Activated naive CD4-positive, alpha-beta T cell treated with anti-CD3 and anti-CD28 coated beads for 36 hours (primary cell): ENCODE measurements at regions of chr12 and their contacts with region 1.

Region 1: DNA sequence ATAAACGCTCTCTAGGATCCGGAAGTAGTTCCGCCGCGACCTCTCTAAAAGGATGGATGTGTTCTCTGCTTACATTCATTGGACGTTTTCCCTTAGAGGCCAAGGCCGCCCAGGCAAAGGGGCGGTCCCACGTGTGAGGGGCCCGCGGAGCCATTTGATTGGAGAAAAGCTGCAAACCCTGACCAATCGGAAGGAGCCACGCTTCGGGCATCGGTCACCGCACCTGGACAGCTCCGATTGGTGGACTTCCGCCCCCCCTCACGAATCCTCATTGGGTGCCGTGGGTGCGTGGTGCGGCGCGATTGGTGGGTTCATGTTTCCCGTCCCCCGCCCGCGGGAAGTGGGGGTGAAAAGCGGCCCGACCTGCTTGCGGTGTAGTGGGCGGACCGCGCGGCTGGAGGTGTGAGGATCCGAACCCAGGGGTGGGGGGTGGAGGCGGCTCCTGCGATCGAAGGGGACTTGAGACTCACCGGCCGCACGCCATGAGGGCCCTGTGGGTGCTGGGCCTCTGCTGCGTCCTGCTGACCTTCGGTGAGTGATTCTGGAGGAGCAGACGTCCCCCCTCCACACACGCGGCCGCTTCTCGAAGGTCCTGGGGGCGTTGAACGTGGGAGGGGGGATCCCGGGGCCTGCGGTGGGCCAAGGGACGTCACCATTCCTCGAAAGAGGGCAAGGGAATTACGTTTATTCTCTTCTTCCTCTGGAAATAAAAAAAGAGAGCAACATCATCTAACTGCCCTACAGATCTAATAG is at the start of gene HSP90B1:
- DNase-seq: peak; percentile 100
- H3K4me3 Mint-ChIP-seq: peak within 1 kb of the TSS; percentile 81
- H3K27ac Mint-ChIP-seq: peak within 1 kb of the TSS; percentile 100
- H3K4me1 Mint-ChIP-seq: peaks cover 57% of the 10 kb centered on the region
- H3K27me3 Mint-ChIP-seq: no peaks in the 10 kb centered on the region
- total RNA-seq, gene HSP90B1: 392 to 418 TPM

Region 2: GRCh38 chr12:103495479-103496456 is 434.4 kb before region 1 on chr12 and contains the start of gene C12orf42:
- CTCF ChIA-PET with region 1: no interaction called
- intact Hi-C with region 1: loop called (anchors 5 kb)
- DNase-seq: peak; percentile 77
- H3K4me3 Mint-ChIP-seq: peak within 1 kb of the TSS; percentile 57
- H3K27ac Mint-ChIP-seq: no peak within 1 kb of the TSS
- H3K4me1 Mint-ChIP-seq: peaks cover 29% of the 10 kb centered on the region
- H3K27me3 Mint-ChIP-seq: peaks cover 34% of the 10 kb centered on the region
- total RNA-seq, gene C12orf42: not detected

Region 3: DNA sequence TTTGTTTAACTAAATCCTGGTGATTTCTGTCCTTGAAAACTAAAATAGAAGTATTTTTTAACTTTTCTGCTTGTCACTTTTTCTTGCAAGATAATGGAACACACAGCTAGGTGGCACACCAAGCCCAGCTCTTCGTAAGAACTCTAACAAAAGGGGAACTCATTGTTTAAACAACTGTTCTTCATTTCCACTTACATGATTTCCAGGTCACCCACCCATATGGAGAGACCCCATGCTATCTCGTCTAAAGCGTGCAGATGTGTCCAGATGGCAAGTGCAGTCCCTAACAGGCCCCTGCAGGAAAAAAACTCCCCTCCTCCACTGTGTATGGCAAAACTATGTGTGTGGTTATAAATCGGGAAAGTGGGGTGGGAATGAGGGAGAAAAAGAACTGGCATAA is 45.9 kb before region 1 on chr12:
- CTCF ChIA-PET with region 1: interaction called, 4 read pairs
- intact Hi-C with region 1: loop called (anchors 1 kb)
- DNase-seq: peak; percentile 75
- H3K4me3 Mint-ChIP-seq: no peak overlapping the region
- H3K27ac Mint-ChIP-seq: no peak overlapping the region
- H3K4me1 Mint-ChIP-seq: peaks cover 22% of the 10 kb centered on the region
- H3K27me3 Mint-ChIP-seq: no peaks in the 10 kb centered on the region

Region 4: GRCh38 chr12:104064031-104064822 is 134.0 kb after region 1 on chr12 and contains the start of gene HCFC2:
- CTCF ChIA-PET with region 1: interaction called, 3 read pairs
- intact Hi-C with region 1: loop called (anchors 1 kb)
- DNase-seq: peak; percentile 91
- H3K4me3 Mint-ChIP-seq: peak within 1 kb of the TSS; percentile 93
- H3K27ac Mint-ChIP-seq: peak within 1 kb of the TSS; percentile 84
- H3K4me1 Mint-ChIP-seq: peaks cover 16% of the 10 kb centered on the region
- H3K27me3 Mint-ChIP-seq: peaks cover 16% of the 10 kb centered on the region
- total RNA-seq, gene HCFC2: 7.4 to 8.3 TPM

Region 5: DNA sequence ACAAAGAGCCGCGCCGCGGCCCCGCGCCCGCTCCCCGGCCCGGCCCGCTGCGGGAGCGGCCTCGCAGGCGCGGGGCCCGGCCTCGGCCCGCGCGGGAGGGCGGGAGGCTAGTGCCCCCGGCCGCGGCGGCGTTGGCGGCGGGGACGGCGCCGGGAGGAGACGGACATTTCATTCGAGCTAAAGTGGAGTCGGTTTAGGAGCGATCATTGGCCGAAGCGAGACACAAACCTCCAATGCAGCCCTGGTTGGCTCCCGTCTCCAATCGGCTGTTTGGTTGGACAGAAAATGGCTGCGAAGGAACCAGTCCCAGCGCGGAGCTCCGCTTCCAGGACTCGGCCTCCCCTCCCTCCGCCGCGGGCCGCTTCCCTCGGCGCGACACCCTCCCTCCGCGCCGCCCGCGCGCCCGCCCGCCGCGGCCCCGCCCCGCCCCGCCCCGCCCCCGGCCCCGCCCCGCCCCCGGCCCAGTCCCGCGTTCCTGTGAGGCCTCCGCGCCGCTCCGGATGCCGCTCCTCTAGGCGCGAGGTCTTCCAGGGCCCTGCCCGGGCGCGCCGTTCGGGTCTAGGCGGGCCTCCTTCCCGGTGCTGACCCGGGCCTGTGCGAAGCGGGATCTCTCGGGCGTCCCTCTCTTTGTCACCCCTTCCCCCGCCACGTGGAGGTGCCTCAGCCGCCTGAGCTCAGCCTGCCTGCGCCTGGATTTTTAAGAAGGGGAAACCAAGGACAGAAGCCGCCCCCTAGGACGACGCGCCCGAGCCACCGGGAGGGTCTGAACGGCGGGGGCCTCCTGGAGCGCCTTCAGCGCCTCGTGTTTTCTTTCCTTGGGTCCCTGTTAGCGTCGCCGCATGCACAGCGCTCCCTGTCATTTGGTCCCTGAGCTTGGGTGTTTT is 207.9 kb after region 1 on chr12 and contains the start of gene NFYB:
- CTCF ChIA-PET with region 1: no interaction called
- intact Hi-C with region 1: loop called (anchors 1 kb)
- DNase-seq: peak; percentile 95
- H3K4me3 Mint-ChIP-seq: peak within 1 kb of the TSS; percentile 84
- H3K27ac Mint-ChIP-seq: peak within 1 kb of the TSS; percentile 84
- H3K4me1 Mint-ChIP-seq: peaks cover 14% of the 10 kb centered on the region
- H3K27me3 Mint-ChIP-seq: no peaks in the 10 kb centered on the region
- total RNA-seq, gene NFYB: 23.3 to 28.3 TPM

Region 6: GRCh38 chr12:104352106-104352713 is 422.0 kb after region 1 on chr12:
- CTCF ChIA-PET with region 1: no interaction called
- intact Hi-C with region 1: no loop called
- DNase-seq: no peak
- H3K4me3 Mint-ChIP-seq: no peak overlapping the region
- H3K27ac Mint-ChIP-seq: no peak overlapping the region
- H3K4me1 Mint-ChIP-seq: peaks cover 3% of the 10 kb centered on the region
- H3K27me3 Mint-ChIP-seq: no peaks in the 10 kb centered on the region

Region 7: DNA sequence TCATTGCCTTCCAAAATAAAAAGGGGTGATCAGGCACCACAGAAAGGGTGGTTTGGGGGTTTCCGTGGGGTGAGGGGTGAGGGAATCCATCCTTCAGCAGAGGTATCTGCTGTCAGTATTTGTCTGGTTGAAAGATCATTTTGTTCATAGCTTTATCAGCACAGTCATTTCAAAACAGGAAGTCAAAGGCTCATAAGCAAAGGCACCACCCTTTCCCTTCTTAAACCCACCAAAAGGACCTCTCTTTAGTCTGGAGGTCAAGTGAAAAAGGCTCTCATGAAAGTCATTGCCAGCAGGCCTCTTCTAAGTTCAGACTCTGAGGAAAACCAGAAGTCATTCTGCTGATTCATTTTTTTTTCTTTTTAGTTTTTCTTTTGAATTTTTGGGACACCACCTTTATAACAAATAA is 532.7 kb after region 1 on chr12:
- CTCF ChIA-PET with region 1: no interaction called
- intact Hi-C with region 1: loop called (anchors 5 kb)
- DNase-seq: peak; percentile 65
- H3K4me3 Mint-ChIP-seq: peak overlapping the region; percentile 49
- H3K27ac Mint-ChIP-seq: peak overlapping the region; percentile 84
- H3K4me1 Mint-ChIP-seq: peaks cover 75% of the 10 kb centered on the region
- H3K27me3 Mint-ChIP-seq: no peaks in the 10 kb centered on the region

Region 8: DNA sequence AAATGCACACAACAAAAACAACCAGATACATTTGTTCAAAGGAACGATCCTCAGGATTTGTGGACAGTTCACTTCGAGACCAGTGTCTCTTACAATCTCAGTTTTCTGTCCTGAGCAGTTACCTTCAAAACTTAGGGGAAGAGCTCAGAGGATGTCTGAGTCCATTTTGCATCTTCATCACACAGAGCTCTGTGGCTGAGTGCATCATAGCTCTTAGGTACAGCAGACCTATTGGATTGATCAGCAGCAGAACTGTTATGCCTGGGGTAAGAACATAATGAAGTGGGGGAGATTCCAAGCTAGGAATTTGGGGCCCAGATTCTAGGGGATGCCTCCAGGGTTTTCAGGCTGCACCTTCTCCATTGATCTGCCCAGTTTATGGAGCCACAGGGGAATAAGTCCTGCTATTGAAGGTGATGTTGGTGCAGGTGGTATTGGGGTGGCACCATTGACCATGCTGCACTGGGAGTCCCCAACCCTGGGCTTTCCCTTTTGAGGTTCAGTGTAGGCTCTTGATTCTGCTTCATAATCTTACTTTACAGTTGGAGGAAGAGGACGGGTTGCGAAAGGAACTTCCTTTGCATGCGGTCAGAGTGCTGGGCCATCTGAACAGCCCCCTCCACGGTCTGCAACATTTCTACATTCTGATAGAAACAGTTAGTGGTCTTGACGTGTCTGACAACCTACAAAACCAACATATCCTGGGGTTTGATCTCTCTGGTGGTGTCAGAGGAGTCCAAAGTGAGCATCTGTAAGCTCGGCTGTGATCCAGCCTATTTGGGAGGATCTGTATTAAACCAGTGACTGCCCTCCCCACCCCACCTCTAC is 639.4 kb after region 1 on chr12:
- CTCF ChIA-PET with region 1: no interaction called
- intact Hi-C with region 1: no loop called
- DNase-seq: peak; percentile 64
- H3K4me3 Mint-ChIP-seq: no peak overlapping the region
- H3K27ac Mint-ChIP-seq: peak overlapping the region; percentile 17
- H3K4me1 Mint-ChIP-seq: peaks cover 49% of the 10 kb centered on the region
- H3K27me3 Mint-ChIP-seq: no peaks in the 10 kb centered on the region

Region 9: GRCh38 chr12:104695453-104696148 is 765.4 kb after region 1 on chr12:
- CTCF ChIA-PET with region 1: no interaction called
- intact Hi-C with region 1: loop called (anchors 2 kb)
- DNase-seq: peak; percentile 97
- H3K4me3 Mint-ChIP-seq: peak overlapping the region; percentile 37
- H3K27ac Mint-ChIP-seq: peak overlapping the region; percentile 93
- H3K4me1 Mint-ChIP-seq: peaks cover 61% of the 10 kb centered on the region
- H3K27me3 Mint-ChIP-seq: no peaks in the 10 kb centered on the region